ENCODE measurements at regions of chr21 and their contacts with region 1.

Region 1: GRCh38 chr21:45799765-45800338 is 156.3 kb downstream of the PCBP3 start:
- DNase-seq: no peak
- H3K4me3 ChIP-seq: no peak overlapping the region
- H3K27ac ChIP-seq: no peak overlapping the region
- H3K4me1 ChIP-seq: no peaks in the 10 kb centered on the region
- H3K27me3 ChIP-seq: no peaks in the 10 kb centered on the region
- CTCF ChIP-seq: no peak

Region 2: GRCh38 chr21:45846373-45847160 is 46.7 kb after region 1 on chr21:
- intact Hi-C with region 1: loop called (anchors 5 kb)
- DNase-seq: no peak
- H3K4me3 ChIP-seq: no peak overlapping the region
- H3K27ac ChIP-seq: no peak overlapping the region
- H3K4me1 ChIP-seq: no peaks in the 10 kb centered on the region
- H3K27me3 ChIP-seq: no peaks in the 10 kb centered on the region
- CTCF ChIP-seq: no peak

Region 3: DNA sequence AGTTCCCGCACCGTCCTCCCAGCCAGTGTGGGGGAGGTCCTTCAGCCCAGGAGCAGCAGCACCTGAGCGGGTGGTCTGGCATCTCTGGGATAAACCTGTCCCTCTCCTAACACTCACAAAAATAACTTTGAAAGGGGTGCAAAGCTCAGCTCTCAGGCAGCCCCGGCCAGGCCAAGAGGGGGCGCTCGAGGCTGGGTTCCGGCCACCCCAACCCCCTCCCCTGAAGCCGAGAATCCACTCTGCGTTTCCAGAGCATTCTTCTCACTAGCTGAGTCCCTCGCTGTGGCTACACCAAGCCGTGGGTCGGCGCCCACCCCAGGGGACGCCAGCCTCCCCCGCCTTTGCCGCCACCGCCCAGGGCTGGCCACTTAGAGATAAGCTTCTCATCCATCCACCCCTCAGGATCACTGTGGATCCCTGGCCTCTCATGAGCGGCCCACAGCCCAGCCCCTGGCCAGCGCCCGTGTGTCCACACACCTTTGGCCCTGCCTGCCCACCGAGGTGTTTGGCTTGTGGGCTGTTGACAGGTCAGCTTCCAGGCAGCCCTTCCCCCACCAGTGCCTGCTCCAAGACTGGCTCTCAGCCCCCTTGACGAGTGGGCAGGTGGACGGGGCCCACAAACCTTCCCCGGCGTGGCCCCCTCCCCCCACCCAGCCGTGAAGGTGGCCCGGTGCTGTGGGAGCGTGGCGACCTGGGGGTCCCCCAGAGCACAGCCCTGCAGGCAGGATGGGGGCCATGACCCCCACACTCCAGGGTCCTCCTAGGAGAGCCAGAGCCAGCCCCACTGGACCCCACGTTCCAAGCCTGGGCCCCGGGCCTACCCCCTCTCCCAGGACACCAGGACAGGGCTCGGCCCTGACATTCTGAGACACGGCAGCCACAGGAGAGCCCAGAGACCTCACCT is 353.6 kb after region 1 on chr21:
- intact Hi-C with region 1: no loop called
- DNase-seq: peak; percentile 58
- H3K4me3 ChIP-seq: peak overlapping the region; percentile 8
- H3K27ac ChIP-seq: no peak overlapping the region
- H3K4me1 ChIP-seq: no peaks in the 10 kb centered on the region
- H3K27me3 ChIP-seq: no peaks in the 10 kb centered on the region
- CTCF ChIP-seq: peak; percentile 62